ENCODE measurements at regions of chr22 and their contacts with region 1.

Region 1: DNA sequence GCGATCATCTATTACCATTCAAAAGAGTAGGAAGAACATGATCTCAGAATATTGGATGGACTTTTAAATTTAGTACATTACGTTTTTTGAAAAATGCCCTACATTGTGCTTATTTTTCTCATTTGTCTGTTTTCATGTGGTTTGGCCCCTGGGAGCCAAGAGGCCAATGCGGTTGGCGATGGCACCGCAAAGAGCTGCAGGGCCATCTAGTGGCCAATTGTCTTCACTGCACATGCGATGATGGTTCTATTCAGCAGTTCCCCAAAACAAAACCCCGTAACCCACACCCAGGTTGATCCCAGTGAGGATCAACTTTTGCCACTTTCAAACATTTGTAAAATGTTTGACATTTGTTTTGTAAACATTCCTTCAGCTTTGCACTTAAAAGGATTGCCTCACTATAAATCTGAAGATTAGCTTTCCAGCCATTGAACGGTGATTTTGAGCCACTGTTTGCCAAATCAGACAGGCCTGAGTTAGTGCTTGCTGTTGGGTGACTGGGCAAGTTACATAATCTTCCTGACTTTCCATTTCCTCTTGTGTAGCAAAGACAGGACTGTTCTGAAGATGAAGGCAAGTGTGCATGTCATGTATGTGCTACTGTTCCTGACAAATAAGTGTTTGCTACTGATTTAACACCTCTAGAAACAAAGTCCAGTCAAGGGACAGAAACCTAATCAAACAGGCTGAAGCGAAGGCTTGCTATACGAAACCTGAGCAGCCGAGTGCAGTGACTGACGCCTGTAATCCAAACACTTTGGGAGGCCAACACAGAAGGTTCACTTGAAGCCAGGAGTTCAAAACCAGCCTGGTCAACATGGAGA is 29.2 kb upstream of the XBP1 start:
- DNase-seq: peak; percentile 71
- H3K4me3 Mint-ChIP-seq: no peak overlapping the region
- H3K27ac Mint-ChIP-seq: no peak overlapping the region
- H3K4me1 Mint-ChIP-seq: peaks cover 32% of the 10 kb centered on the region
- H3K27me3 Mint-ChIP-seq: no peaks in the 10 kb centered on the region

Region 2: GRCh38 chr22:28600546-28601143 is 228.9 kb before region 1 on chr22:
- intact Hi-C with region 1: loop called (anchors 1 kb)
- DNase-seq: no peak
- H3K4me3 Mint-ChIP-seq: no peak overlapping the region
- H3K27ac Mint-ChIP-seq: no peak overlapping the region
- H3K4me1 Mint-ChIP-seq: no peaks in the 10 kb centered on the region
- H3K27me3 Mint-ChIP-seq: peaks cover 36% of the 10 kb centered on the region

Region 3: DNA sequence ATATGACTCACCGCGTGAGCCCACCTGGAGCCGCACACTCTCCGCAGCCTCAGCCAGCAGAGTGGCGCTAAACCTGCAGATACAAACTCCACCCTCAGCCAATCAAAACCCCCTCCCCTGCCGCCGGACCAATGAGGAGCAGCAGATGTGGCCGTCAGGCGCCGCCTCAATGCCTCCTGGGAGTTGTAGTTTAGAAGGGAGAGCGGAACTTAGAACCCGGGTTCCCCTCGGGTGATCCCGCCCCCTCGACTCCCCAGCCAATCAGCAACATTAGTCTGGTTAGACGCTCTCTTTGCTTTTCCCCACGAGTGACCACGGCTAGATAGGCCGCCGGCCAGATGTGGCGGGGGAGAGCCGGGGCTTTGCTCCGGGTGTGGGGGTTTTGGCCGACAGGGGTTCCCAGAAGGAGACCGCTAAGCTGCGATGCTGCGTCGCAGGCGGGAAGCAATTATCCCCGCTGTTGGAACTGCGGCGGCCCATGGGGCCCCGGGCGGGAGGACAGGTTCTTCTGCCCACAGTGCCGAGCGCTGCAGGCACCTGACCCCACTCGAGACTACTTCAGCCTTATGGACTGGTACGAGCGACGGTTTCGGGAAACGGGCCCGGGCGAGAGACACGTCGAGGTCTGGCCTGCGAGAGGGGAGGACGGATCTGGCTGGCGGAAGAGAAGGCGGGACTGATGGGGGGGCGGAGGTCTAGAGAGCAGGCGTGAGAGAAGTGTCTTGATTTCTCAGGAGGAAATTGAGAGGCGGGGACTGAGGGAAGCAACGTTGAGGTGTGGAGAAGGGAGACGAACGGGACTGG is 87.6 kb before region 1 on chr22 and contains the starts of genes CHEK2 and HSCB:
- intact Hi-C with region 1: loop called (anchors 1 kb)
- DNase-seq: peak; percentile 97
- H3K4me3 Mint-ChIP-seq: peak within 1 kb of the TSS; percentile 86
- H3K27ac Mint-ChIP-seq: peak within 1 kb of the TSS; percentile 70
- H3K4me1 Mint-ChIP-seq: peaks cover 42% of the 10 kb centered on the region
- H3K27me3 Mint-ChIP-seq: no peaks in the 10 kb centered on the region
- total RNA-seq, gene CHEK2: 31.4 and 35.0 TPM in 2 replicates
- total RNA-seq, gene HSCB: 16.6 and 18.0 TPM in 2 replicates

Region 4: GRCh38 chr22:28772633-28773460 is 56.7 kb before region 1 on chr22 and contains the start of gene CCDC117:
- intact Hi-C with region 1: loop called (anchors 1 kb)
- DNase-seq: peak; percentile 90
- H3K4me3 Mint-ChIP-seq: peak within 1 kb of the TSS; percentile 100
- H3K27ac Mint-ChIP-seq: peak within 1 kb of the TSS; percentile 100
- H3K4me1 Mint-ChIP-seq: peaks cover 22% of the 10 kb centered on the region
- H3K27me3 Mint-ChIP-seq: peaks cover 4% of the 10 kb centered on the region
- total RNA-seq, gene CCDC117: 46.4 and 52.8 TPM in 2 replicates

Region 5: GRCh38 chr22:28790659-28791058 is 38.9 kb before region 1 on chr22:
- intact Hi-C with region 1: loop called (anchors 1 kb)
- DNase-seq: no peak
- H3K4me3 Mint-ChIP-seq: no peak overlapping the region
- H3K27ac Mint-ChIP-seq: no peak overlapping the region
- H3K4me1 Mint-ChIP-seq: peaks cover 48% of the 10 kb centered on the region
- H3K27me3 Mint-ChIP-seq: no peaks in the 10 kb centered on the region

Region 6: DNA sequence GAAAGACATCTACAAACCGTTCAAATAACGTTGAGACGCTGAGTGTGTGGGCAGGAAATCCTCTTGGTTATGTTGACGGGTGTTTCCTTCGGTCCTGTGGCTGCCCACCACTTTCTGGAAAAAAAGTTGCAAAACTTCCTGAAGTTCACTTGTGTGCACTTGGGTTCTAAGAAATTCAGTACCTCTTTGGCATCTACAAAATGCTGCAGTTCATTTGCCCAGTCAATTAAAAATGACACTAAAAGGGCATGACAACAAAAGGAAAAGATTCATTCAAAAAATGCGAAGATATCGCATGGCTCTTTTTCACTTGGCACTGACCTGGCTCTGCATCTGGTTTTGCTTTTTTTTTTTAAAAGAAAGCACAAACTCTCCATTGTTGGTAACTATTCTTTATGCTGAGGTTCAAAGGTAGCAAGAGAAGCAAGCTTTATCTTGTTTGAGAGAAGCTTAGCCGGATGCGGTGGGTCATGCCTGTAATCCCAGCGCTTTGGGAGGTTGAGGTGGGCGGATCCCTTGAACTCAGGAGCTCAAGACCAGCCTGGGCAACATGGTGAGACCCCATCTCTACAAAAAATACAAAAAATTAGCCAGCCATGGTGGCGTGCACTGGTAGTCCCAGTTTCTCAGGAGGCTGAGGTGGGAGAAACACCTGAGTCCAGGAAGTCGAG is 18.6 kb before region 1 on chr22:
- intact Hi-C with region 1: loop called (anchors 1 kb)
- DNase-seq: peak; percentile 60
- H3K4me3 Mint-ChIP-seq: peak overlapping the region; percentile 76
- H3K27ac Mint-ChIP-seq: peak overlapping the region; percentile 89
- H3K4me1 Mint-ChIP-seq: peaks cover 81% of the 10 kb centered on the region
- H3K27me3 Mint-ChIP-seq: no peaks in the 10 kb centered on the region

Region 7: GRCh38 chr22:29040385-29041275 is 211.1 kb after region 1 on chr22:
- intact Hi-C with region 1: loop called (anchors 1 kb)
- DNase-seq: peak; percentile 44
- H3K4me3 Mint-ChIP-seq: no peak overlapping the region
- H3K27ac Mint-ChIP-seq: no peak overlapping the region
- H3K4me1 Mint-ChIP-seq: no peaks in the 10 kb centered on the region
- H3K27me3 Mint-ChIP-seq: peaks cover 12% of the 10 kb centered on the region